ENCODE measurements at regions of chr7 and their contacts with region 1.

Region 1: DNA sequence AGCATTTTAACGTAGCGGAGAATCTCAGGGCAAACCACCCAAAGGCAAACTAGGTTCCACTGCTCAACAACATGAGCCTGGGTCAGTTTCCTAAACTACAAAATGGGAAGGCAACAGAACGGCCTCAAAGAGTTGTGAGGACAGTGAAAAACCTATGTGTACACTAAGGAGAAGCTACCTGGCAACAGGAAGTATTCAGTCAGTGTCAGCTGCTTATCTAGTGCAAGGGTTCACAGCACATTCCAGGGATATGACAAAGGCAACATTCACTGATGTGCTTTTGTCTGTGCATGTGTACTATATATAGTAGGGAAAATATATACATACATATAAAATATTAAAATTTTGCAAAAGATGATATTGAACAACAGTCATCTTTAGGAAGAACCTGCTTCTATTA is 17.2 kb downstream of the NUDCD3 start:
- H3K4me3 ChIP-seq: no peak overlapping the region
- H3K27ac ChIP-seq: no peak overlapping the region
- H3K4me1 ChIP-seq: peaks cover 5% of the 10 kb centered on the region
- CTCF ChIP-seq: no peak

Region 2: GRCh38 chr7:44240983-44241510 is 232.2 kb before region 1 on chr7:
- CTCF ChIA-PET with region 1: interaction called, 20 read pairs
- POLR2A ChIA-PET with region 1: no interaction called
- H3K4me3 ChIP-seq: no peak overlapping the region
- H3K27ac ChIP-seq: no peak overlapping the region
- H3K4me1 ChIP-seq: no peaks in the 10 kb centered on the region
- CTCF ChIP-seq: peak; percentile 74

Region 3: GRCh38 chr7:44505595-44505994 is 32.3 kb after region 1 on chr7:
- CTCF ChIA-PET with region 1: no interaction called
- POLR2A ChIA-PET with region 1: no interaction called
- H3K4me3 ChIP-seq: no peak overlapping the region
- H3K27ac ChIP-seq: no peak overlapping the region
- H3K4me1 ChIP-seq: no peaks in the 10 kb centered on the region
- CTCF ChIP-seq: no peak

Region 4: GRCh38 chr7:44559485-44559884 is 86.2 kb after region 1 on chr7:
- CTCF ChIA-PET with region 1: no interaction called
- POLR2A ChIA-PET with region 1: no interaction called
- H3K4me3 ChIP-seq: no peak overlapping the region
- H3K27ac ChIP-seq: no peak overlapping the region
- H3K4me1 ChIP-seq: no peaks in the 10 kb centered on the region; the same call in 1 of the 2 replicates
- CTCF ChIP-seq: no peak